ENCODE measurements at regions of chr6 and their contacts with region 1.

Region 1: DNA sequence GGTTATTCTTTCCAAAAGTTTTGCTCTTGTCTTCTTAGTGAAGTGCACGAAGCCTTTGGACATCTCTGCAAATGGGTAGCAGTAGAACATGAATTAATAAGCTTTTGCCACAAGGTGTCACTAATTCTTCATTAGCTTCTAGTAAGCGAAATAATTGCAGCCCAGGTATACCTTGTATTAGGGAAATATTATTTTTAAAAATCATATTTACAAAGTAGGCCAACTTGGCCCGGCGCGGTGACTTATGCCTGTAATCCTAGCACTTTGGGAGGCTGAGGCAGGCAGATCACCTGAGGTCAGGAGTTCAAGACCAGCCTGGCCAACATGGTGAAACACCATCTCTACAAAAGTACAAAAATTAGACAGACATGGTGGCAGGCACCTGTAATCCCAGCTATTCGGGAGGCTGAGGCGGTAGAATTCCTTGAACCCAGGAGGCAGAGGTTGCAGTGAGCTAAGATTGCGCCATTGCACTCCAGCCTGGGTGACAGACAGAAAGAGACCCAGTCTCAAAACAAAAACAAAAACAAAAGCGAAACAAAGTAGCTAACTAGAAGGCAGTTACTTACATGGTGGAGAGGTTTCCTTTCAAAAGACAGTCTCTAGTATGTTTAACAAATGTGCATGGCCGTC is 8.8 kb upstream of the RSPH3 start:
- DNase-seq: peak; percentile 28
- H3K4me3 Mint-ChIP-seq: peak overlapping the region; percentile 44
- H3K27ac Mint-ChIP-seq: peak overlapping the region; percentile 56
- H3K4me1 Mint-ChIP-seq: peaks cover 42% of the 10 kb centered on the region
- H3K27me3 Mint-ChIP-seq: no peaks in the 10 kb centered on the region

Region 2: GRCh38 chr6:158571826-158572652 is 436.7 kb before region 1 on chr6:
- CTCF ChIA-PET with region 1: no interaction called
- POLR2A ChIA-PET with region 1: no interaction called
- DNase-seq: peak; percentile 26
- H3K4me3 Mint-ChIP-seq: no peak overlapping the region
- H3K27ac Mint-ChIP-seq: peak overlapping the region; percentile 67
- H3K4me1 Mint-ChIP-seq: peaks cover 84% of the 10 kb centered on the region
- H3K27me3 Mint-ChIP-seq: no peaks in the 10 kb centered on the region

Region 3: DNA sequence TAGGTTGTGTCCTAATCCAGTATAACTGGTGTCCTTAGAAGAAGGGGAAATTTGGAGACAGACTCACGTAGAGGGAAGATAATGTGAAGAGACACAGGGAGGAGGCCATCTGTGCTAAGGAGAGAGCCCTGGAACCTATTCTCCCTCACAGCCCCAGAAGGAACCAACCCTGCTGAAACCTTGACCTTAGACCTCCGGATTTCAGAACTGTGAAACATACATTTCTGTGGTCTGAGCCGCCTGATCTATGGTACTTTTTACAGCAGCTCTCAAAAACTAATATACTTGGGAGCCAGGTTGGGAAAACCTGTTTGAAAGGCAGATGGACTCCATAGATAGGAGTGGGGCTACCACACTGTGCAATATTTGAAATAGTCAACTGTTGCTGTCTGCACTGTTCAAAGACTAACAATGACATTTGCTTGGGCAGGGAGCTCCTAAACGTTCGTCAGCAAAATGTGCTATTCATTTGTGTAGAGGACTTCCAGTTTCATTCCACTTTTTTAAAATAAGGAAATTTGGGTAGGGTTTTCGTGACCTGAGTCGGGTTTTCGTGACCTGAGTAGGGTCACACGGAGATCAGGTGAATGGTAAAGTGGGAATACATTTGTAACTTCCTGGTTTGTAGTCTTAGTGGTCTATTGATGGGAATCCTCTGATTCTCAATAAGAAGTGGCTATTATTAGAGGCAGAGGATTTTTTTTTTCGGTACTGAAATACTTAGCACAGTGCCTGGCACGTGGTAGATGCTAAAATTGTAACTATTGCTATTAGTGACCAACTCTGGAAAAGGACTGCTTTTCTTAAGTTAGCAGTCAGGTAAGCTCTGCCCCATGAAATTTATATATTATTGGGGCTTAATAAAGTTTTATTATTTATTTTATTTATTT is 24.6 kb after region 1 on chr6:
- CTCF ChIA-PET with region 1: interaction called, 11 read pairs
- POLR2A ChIA-PET with region 1: interaction called, 22 read pairs
- DNase-seq: no peak
- H3K4me3 Mint-ChIP-seq: no peak overlapping the region
- H3K27ac Mint-ChIP-seq: no peak overlapping the region
- H3K4me1 Mint-ChIP-seq: peaks cover 21% of the 10 kb centered on the region
- H3K27me3 Mint-ChIP-seq: no peaks in the 10 kb centered on the region

Region 4: DNA sequence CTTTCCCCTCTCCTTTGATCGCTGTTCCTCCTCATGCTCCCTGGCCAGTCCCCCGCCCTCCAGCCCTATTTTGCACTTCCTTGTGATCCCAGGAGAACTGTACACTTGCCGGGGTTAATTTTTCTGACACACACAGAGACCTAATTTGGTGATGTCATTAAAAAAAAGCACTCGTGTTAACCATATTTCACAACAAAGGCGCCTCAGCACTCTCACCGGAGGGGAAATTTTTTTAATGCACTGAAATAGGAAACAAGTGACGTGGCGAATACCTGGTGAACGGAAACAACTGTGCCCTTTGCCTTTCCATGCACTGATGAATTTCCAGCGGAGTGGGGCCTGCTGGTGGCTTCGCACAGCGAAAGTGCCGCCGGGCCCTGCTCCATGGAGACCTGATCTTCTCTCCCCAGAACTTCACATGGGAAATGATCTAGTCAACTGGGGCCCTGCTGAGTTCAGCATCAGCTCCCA is 89.9 kb after region 1 on chr6:
- CTCF ChIA-PET with region 1: interaction called, 410 read pairs
- POLR2A ChIA-PET with region 1: interaction called, 27 read pairs
- DNase-seq: peak; percentile 61
- H3K4me3 Mint-ChIP-seq: peak overlapping the region; percentile 49
- H3K27ac Mint-ChIP-seq: peak overlapping the region; percentile 73
- H3K4me1 Mint-ChIP-seq: peaks cover 56% of the 10 kb centered on the region
- H3K27me3 Mint-ChIP-seq: no peaks in the 10 kb centered on the region

Region 5: GRCh38 chr6:159116343-159116742 is 107.6 kb after region 1 on chr6:
- CTCF ChIA-PET with region 1: interaction called, 410 read pairs
- POLR2A ChIA-PET with region 1: no interaction called
- DNase-seq: no peak
- H3K4me3 Mint-ChIP-seq: no peak overlapping the region
- H3K27ac Mint-ChIP-seq: no peak overlapping the region
- H3K4me1 Mint-ChIP-seq: peaks cover 14% of the 10 kb centered on the region
- H3K27me3 Mint-ChIP-seq: peaks cover 5% of the 10 kb centered on the region

Region 6: DNA sequence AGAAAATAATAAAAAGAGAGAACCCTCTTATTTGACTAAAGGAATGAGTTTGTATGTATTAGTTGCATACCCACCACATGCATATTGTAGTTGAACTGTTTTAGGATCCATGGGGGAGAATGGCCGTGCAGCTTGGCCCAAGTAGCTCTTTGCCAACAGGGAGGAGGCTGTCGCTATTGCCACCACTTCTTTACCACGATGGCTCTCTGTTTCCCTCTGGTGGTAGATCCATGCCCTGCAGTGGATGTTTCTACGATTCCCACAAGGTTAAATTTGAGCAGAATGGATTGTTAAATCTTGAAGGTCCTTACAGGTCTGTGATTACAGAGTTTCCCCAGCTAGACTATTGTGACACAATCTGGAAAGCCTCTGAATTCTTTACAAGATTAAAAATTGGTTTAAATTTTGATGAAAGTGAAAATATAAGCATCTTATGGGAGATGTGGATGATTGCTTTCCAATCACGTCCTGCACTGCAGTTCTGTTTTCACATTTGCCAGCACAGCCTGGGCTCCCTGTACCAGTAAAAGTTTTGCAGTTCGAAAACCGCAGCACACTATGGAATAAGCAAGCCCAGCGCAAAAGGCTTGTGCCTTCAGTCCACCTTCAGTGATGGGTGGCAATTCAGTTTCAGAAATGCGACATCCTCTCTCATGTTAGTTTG is 126.1 kb after region 1 on chr6:
- CTCF ChIA-PET with region 1: interaction called, 189 read pairs
- POLR2A ChIA-PET with region 1: interaction called, 14 read pairs
- DNase-seq: peak; percentile 79
- H3K4me3 Mint-ChIP-seq: no peak overlapping the region
- H3K27ac Mint-ChIP-seq: no peak overlapping the region
- H3K4me1 Mint-ChIP-seq: peaks cover 2% of the 10 kb centered on the region
- H3K27me3 Mint-ChIP-seq: peaks cover 30% of the 10 kb centered on the region

Measured in activated CD4-positive, alpha-beta memory T cell treated with anti-CD3 and anti-CD28 coated beads, Interleukin-2, amount 10 ng/mL, durations not matched to agents 7 days and 5 days (primary cell).